ENCODE measurements at regions of chr12 and their contacts with region 1.

Region 1: DNA sequence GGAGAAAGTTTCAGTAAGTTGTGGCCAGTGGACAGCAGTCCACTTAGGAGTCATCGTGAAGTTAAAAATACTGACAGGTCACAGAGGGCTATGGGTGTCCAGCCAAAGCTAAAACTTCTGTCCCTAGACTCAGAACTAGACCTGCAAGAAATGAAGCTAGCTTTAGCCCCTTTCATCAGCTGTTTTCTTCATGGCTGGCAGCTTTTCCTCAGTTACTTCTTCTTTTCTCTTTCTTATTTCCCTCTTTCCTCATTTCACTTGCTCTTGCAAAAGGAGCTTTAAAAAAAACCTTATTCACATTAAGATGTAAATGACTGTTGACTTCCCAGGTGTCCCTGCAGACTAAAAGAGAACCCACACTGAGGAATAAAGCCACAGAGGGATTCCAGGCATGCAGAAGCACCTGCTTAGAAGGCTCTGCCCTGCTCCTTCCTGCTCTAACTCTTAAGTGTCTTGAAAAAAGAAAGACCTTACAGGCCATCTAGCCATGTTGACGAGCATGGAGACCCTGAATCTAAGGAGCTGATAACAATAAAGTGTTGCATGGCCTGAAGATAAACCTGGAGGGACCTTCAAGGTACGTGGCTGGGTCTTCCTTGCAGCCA is 69.7 kb upstream of the CCND2 start:
- DNase-seq: peak; percentile 40 to 64 (median 51)
- H3K4me3 ChIP-seq: peak overlapping the region in 1 of 3 experiments; percentile 51
- H3K4me3 Mint-ChIP-seq: peak overlapping the region in 1 of 2 donors; percentile 48
- H3K27ac ChIP-seq: peak overlapping the region in 1 of 2 donors; percentile 8
- H3K27ac Mint-ChIP-seq: peak overlapping the region; percentile 26 to 78 (median 62)
- H3K4me1 ChIP-seq: peaks cover 35 to 46% of the 10 kb centered on the region in 2 donors
- H3K4me1 Mint-ChIP-seq: peaks cover 44% of the 10 kb centered on the region
- H3K27me3 ChIP-seq: no peaks in the 10 kb centered on the region
- H3K27me3 Mint-ChIP-seq: peaks cover 0 to 3% (median 3%) of the 10 kb centered on the region in 3 donors
- CTCF ChIP-seq: no peak

Region 2: GRCh38 chr12:4135919-4136605 is 67.8 kb before region 1 on chr12:
- intact Hi-C with region 1: no loop called
- DNase-seq: peak; percentile 77 to 89 (median 84)
- H3K4me3 ChIP-seq: peak overlapping the region in 1 of 3 experiments; percentile 33
- H3K4me3 Mint-ChIP-seq: peak overlapping the region in 1 of 2 donors; percentile 32
- H3K27ac ChIP-seq: peak overlapping the region; percentile 67 to 81
- H3K27ac Mint-ChIP-seq: peak overlapping the region; percentile 87 to 95 (median 94)
- H3K4me1 ChIP-seq: peaks cover 52% of the 10 kb centered on the region in 2 donors
- H3K4me1 Mint-ChIP-seq: peaks cover 54% of the 10 kb centered on the region
- H3K27me3 ChIP-seq: no peaks in the 10 kb centered on the region
- H3K27me3 Mint-ChIP-seq: peaks cover 0 to 6% (median 2%) of the 10 kb centered on the region in 3 donors
- CTCF ChIP-seq: no peak

Region 3: GRCh38 chr12:4243091-4243490 is 39.2 kb after region 1 on chr12:
- intact Hi-C with region 1: loop called in 1 of 2 experiments (anchors 5 kb)
- DNase-seq: peak; percentile 28 to 62 (median 42)
- H3K4me3 ChIP-seq: no peak overlapping the region
- H3K4me3 Mint-ChIP-seq: peak overlapping the region in 1 of 2 donors; percentile 48
- H3K27ac ChIP-seq: peak overlapping the region; percentile 27 to 34
- H3K27ac Mint-ChIP-seq: peak overlapping the region in 6 of 7 donors; percentile 80 to 91 (median 84)
- H3K4me1 ChIP-seq: peaks cover 63 to 64% of the 10 kb centered on the region in 2 donors
- H3K4me1 Mint-ChIP-seq: peaks cover 68% of the 10 kb centered on the region
- H3K27me3 ChIP-seq: peaks cover 0 to 4% of the 10 kb centered on the region in 2 donors
- H3K27me3 Mint-ChIP-seq: peaks cover 8 to 20% (median 12%) of the 10 kb centered on the region in 3 donors
- CTCF ChIP-seq: no peak

Measured in CD14-positive monocyte (primary cell).